Naive thymus-derived CD4-positive, alpha-beta T cell (primary cell): ENCODE measurements at regions of chr2 and their contacts with region 1.

Region 1: DNA sequence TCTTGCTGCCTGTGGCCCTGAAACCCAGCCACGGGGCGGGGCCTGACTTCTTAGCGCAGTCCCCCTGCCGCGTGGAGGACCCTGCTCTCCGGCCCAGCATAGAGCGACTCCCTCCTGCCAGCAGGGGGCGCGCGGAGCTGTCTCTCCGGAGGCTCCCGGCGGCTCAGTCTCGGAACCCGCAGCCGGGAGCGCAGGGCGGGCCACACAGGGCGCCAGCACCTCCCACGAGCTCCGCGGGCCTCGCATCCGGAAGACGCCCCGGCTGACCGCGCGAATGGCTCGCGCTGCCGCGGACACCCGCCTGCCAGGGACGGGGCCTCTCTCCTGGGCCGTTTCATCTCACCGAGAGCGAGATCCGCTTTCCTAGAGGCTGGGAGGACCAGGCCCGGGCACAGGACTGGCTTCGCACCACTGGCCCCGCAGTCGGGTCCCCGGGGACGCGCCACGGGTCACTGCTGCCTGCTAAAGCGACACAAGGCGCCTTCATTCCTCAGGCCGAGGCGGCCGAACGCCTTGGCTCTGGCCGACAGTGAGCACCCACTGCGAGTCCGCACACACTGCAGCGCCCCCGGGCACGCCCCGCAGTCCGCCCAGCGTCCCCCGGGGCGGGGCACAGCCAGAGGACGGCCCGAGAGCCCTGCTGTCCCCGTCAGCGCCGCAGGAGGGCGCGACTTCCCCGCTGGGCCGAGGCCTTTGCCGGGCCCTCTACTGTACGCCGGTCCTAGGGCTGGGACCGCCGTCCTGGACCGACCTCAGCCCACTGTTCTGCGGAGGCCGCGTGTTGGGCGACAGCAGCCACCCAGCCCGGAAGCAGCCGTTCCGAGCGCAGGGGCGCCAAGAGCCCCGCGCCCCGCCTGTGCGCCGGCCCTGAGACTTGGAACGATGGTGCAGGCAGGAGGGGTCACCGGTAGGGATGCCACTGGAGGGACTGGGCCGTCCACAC is 39.0 kb upstream of the ARHGEF4 start:
- DNase-seq: peak; percentile 78 to 95 (median 88)
- ATAC-seq: peak; percentile 94
- H3K4me3 ChIP-seq: peak overlapping the region; percentile 97
- H3K4me3 Mint-ChIP-seq: peak overlapping the region; percentile 58 to 82 (median 73)
- H3K27ac ChIP-seq: peak overlapping the region; percentile 78
- H3K27ac Mint-ChIP-seq: peak overlapping the region in 5 of 9 donors; percentile 8 to 78 (median 50)
- H3K4me1 ChIP-seq: peaks cover 0 to 3% of the 10 kb centered on the region in 2 donors
- H3K4me1 Mint-ChIP-seq: peaks cover 0 to 15% (median 4%) of the 10 kb centered on the region in 7 donors
- H3K27me3 ChIP-seq: no peaks in the 10 kb centered on the region
- H3K27me3 Mint-ChIP-seq: peaks cover 0 to 15% (median 0%) of the 10 kb centered on the region in 5 donors

Region 2: DNA sequence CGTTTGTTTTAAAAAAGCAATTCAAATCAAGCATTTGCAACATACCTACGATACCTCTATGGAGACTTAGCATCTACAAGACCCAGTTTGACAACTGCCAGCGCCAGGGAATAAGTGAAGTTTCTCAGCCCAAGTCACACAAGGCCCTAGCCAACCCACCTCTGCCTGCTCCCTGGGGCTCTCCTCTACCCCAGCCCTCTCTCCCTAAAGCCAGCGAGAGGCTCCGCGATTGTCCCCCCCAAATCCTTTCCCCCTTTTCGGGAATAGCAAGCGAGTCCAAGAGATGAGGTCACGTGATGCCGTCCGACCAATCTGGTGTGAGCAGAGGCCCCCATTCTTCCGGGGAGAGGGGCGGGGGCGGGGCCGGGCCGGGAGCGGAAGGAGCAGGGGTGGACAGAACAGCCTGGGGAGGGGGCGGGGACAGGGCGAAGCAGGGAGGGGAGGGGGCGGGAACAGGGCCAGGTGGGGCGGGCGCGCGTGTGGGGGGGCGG is 920.4 kb before region 1 on chr2:
- CTCF ChIA-PET with region 1: no interaction called
- POLR2A ChIA-PET with region 1: no interaction called
- intact Hi-C with region 1: loop called in 1 of 2 experiments (anchors 1 kb)
- DNase-seq: peak; percentile 61 to 82 (median 78)
- ATAC-seq: peak; percentile 95
- H3K4me3 ChIP-seq: peak overlapping the region; percentile 96
- H3K4me3 Mint-ChIP-seq: peak overlapping the region; percentile 86 to 99 (median 96)
- H3K27ac ChIP-seq: peak overlapping the region; percentile 78
- H3K27ac Mint-ChIP-seq: peak overlapping the region; percentile 77 to 97 (median 92)
- H3K4me1 ChIP-seq: peaks cover 5 to 7% of the 10 kb centered on the region in 2 donors
- H3K4me1 Mint-ChIP-seq: peaks cover 6 to 18% (median 13%) of the 10 kb centered on the region in 7 donors
- H3K27me3 ChIP-seq: no peaks in the 10 kb centered on the region
- H3K27me3 Mint-ChIP-seq: peaks cover 0 to 2% (median 0%) of the 10 kb centered on the region in 5 donors

Region 3: GRCh38 chr2:130727286-130728018 is 70.3 kb before region 1 on chr2:
- CTCF ChIA-PET with region 1: interaction called, 6 read pairs
- POLR2A ChIA-PET with region 1: interaction called, 16 read pairs
- intact Hi-C with region 1: loop called (anchors 1 kb)
- DNase-seq: peak; percentile 74 to 91 (median 85)
- ATAC-seq: peak; percentile 98
- H3K4me3 ChIP-seq: peak overlapping the region; percentile 86
- H3K4me3 Mint-ChIP-seq: peak overlapping the region; percentile 74 to 89 (median 86)
- H3K27ac ChIP-seq: peak overlapping the region; percentile 83
- H3K27ac Mint-ChIP-seq: peak overlapping the region; percentile 76 to 95 (median 91)
- H3K4me1 ChIP-seq: peaks cover 15 to 18% of the 10 kb centered on the region in 2 donors
- H3K4me1 Mint-ChIP-seq: peaks cover 0 to 17% (median 16%) of the 10 kb centered on the region in 7 donors
- H3K27me3 ChIP-seq: no peaks in the 10 kb centered on the region
- H3K27me3 Mint-ChIP-seq: peaks cover 0 to 13% (median 0%) of the 10 kb centered on the region in 5 donors

Region 4: GRCh38 chr2:130842770-130843169 is 45.0 kb after region 1 on chr2:
- CTCF ChIA-PET with region 1: no interaction called
- POLR2A ChIA-PET with region 1: no interaction called
- intact Hi-C with region 1: loop called (anchors 5 kb)
- DNase-seq: no peak
- ATAC-seq: no peak
- H3K4me3 ChIP-seq: no peak overlapping the region
- H3K4me3 Mint-ChIP-seq: no peak overlapping the region
- H3K27ac ChIP-seq: no peak overlapping the region
- H3K27ac Mint-ChIP-seq: no peak overlapping the region
- H3K4me1 ChIP-seq: no peaks in the 10 kb centered on the region
- H3K4me1 Mint-ChIP-seq: no peaks in the 10 kb centered on the region
- H3K27me3 ChIP-seq: no peaks in the 10 kb centered on the region
- H3K27me3 Mint-ChIP-seq: peaks cover 16 to 38% (median 23%) of the 10 kb centered on the region in 5 donors

Region 5: DNA sequence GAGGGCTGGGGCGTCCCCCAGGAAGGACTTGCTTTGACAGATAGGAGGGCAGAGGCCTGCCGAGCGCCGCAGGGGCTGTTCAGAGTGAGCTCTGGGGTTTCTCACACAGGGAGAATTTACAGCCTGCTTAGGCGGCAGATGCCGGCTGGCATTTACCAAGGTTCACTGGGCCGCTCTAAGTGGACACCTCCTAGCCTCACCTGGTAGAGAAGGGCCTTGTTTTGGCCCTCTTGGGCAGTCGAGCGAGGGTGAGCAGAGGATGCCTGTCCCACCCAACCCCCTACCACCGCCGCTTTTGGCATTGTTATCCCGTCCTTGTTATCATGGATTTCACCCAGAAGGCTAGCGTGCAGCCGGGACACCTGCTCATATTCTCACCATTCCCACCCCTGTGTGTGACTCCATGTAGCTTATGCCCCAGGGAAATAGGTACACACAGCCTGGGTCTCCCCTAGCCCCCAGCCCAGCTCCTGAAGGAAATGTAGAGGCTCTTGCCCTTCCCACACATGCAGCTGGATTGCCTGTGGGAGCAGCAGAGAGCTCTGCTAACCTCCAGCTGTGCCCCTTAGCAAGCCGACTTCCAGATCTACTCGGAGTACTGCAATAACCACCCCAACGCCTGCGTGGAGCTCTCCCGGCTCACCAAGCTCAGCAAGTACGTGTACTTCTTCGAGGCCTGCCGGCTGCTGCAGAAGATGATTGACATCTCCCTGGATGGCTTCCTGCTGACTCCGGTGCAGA is 243.1 kb after region 1 on chr2:
- CTCF ChIA-PET with region 1: no interaction called
- POLR2A ChIA-PET with region 1: no interaction called
- intact Hi-C with region 1: loop called in 1 of 2 experiments (anchors 2 kb)
- DNase-seq: peak in 3 of 9 donors; percentile 17 to 28 (median 20)
- ATAC-seq: no peak
- H3K4me3 ChIP-seq: peak overlapping the region; percentile 63
- H3K4me3 Mint-ChIP-seq: peak overlapping the region; percentile 67 to 92 (median 84)
- H3K27ac ChIP-seq: peak overlapping the region; percentile 42
- H3K27ac Mint-ChIP-seq: peak overlapping the region; percentile 18 to 93 (median 79)
- H3K4me1 ChIP-seq: peaks cover 19 to 23% of the 10 kb centered on the region in 2 donors
- H3K4me1 Mint-ChIP-seq: peaks cover 7 to 42% (median 26%) of the 10 kb centered on the region in 7 donors
- H3K27me3 ChIP-seq: no peaks in the 10 kb centered on the region
- H3K27me3 Mint-ChIP-seq: peaks cover 0 to 31% (median 0%) of the 10 kb centered on the region in 5 donors

Region 6: GRCh38 chr2:131154071-131154531 is 356.3 kb after region 1 on chr2:
- CTCF ChIA-PET with region 1: no interaction called
- POLR2A ChIA-PET with region 1: no interaction called
- intact Hi-C with region 1: loop called in 1 of 2 experiments (anchors 5 kb)
- DNase-seq: peak; percentile 34 to 78 (median 55)
- ATAC-seq: peak; percentile 86
- H3K4me3 ChIP-seq: peak overlapping the region; percentile 11
- H3K4me3 Mint-ChIP-seq: peak overlapping the region in 3 of 10 donors; percentile 32 to 41 (median 33)
- H3K27ac ChIP-seq: no peak overlapping the region
- H3K27ac Mint-ChIP-seq: peak overlapping the region in 4 of 9 donors; percentile 0 to 46 (median 10)
- H3K4me1 ChIP-seq: no peaks in the 10 kb centered on the region
- H3K4me1 Mint-ChIP-seq: peaks cover 5 to 25% (median 16%) of the 10 kb centered on the region in 7 donors
- H3K27me3 ChIP-seq: no peaks in the 10 kb centered on the region
- H3K27me3 Mint-ChIP-seq: peaks cover 0 to 8% (median 0%) of the 10 kb centered on the region in 5 donors